ENCODE measurements at regions of chr6 and their contacts with region 1.

Region 1: DNA sequence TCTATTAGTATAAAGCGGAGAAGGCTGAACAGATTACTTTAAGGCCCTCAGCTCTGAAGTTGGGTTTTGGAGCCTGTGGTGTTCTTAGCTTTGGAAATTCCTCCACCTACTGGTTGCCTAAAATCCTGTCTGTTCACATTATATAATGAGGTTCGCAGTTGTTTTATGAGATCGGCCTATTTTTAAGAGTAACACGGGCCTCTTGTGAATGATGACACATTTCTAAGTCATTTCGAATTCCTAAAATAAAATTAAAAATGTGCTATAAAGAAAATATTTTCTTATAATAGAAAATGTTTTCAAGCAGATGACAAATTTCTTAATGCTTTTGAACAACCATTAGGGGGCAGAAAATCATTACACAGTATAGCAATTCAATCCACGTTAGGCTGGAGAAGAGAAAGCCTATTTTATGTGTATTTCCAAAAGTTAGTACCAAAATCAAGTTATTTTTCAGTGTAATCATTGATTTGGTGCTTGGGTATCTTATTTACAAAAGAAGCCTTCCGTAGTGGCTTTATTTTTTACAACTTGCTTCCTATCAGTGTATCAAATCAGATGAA is 15.8 kb upstream of the FAM8A1 start:
- DNase-seq: peak in 2 of 5 donors; percentile 17 to 28
- H3K4me3 ChIP-seq: no peak overlapping the region
- H3K27ac ChIP-seq: peak overlapping the region in 1 of 2 donors; percentile 62
- H3K4me1 ChIP-seq: no peaks in the 10 kb centered on the region
- H3K27me3 ChIP-seq: no peaks in the 10 kb centered on the region
- CTCF ChIP-seq: peak; percentile 64 to 92 (median 85)
- EP300 ChIP-seq: no peak
- POLR2A ChIP-seq: no peak

Region 2: DNA sequence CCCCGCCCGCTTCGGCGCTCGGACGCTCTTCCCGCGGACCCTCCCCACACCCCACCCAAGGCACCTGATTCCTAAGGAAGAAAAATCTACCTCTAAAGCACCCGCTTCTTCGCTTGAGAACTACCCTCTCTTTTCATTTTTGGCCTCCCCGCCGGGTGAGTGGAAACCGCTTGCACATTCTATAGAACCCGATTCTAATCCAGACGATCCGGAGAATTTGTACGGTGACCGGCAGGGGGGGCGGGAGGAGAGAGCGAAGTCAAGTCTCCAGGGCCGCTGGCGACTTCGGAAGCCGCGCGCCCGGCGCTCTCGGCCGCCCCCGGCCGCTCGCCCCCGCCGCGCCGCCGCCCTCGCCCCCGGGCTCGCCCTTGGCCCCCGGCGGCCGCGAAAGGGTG is 303.2 kb before region 1 on chr6 and contains the start of gene RBM24:
- intact Hi-C with region 1: loop called in 2 of 4 experiments (anchors 10 kb)
- DNase-seq: peak; percentile 51 to 70 (median 66)
- H3K4me3 ChIP-seq: peak within 1 kb of the TSS; percentile 53
- H3K27ac ChIP-seq: peak within 1 kb of the TSS; percentile 68 to 72
- H3K4me1 ChIP-seq: peaks cover 4% of the 10 kb centered on the region
- H3K27me3 ChIP-seq: no peaks in the 10 kb centered on the region
- CTCF ChIP-seq: no peak
- EP300 ChIP-seq: no peak
- POLR2A ChIP-seq: no peak
- total RNA-seq, gene RBM24: 1.1 to 6.5 (median 2.0) TPM

Region 3: DNA sequence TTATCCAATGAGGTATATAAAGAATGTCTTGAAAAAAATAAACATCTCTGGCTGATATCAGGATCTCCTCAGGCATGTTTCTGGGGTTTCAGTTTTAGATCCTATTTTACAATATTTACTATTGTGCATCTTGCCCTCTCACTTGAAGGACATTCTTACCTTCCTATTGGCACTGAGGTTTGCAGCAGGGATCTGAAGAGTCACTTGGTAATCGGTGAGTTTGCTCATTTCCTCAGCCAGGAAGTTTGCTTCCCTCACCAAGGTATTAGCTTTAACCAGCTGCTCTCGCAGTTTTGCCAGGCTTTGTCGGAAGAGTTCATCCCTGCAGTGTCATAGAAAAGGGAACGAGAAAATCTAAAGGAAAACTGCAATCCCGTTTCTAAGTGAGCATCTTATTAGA is 224.3 kb after region 1 on chr6:
- intact Hi-C with region 1: loop called in 1 of 4 experiments (anchors 10 kb)
- DNase-seq: no peak
- H3K4me3 ChIP-seq: no peak overlapping the region
- H3K27ac ChIP-seq: no peak overlapping the region
- H3K4me1 ChIP-seq: no peaks in the 10 kb centered on the region
- H3K27me3 ChIP-seq: no peaks in the 10 kb centered on the region
- CTCF ChIP-seq: no peak
- EP300 ChIP-seq: no peak
- POLR2A ChIP-seq: no peak

Measured in ovary (tissue), 10 donors.